Activated CD4-positive, alpha-beta T cell treated with anti-CD3 and anti-CD28 coated beads for 36 hours (primary cell): ENCODE measurements at regions of chr22 and their contacts with region 1.

Region 1: DNA sequence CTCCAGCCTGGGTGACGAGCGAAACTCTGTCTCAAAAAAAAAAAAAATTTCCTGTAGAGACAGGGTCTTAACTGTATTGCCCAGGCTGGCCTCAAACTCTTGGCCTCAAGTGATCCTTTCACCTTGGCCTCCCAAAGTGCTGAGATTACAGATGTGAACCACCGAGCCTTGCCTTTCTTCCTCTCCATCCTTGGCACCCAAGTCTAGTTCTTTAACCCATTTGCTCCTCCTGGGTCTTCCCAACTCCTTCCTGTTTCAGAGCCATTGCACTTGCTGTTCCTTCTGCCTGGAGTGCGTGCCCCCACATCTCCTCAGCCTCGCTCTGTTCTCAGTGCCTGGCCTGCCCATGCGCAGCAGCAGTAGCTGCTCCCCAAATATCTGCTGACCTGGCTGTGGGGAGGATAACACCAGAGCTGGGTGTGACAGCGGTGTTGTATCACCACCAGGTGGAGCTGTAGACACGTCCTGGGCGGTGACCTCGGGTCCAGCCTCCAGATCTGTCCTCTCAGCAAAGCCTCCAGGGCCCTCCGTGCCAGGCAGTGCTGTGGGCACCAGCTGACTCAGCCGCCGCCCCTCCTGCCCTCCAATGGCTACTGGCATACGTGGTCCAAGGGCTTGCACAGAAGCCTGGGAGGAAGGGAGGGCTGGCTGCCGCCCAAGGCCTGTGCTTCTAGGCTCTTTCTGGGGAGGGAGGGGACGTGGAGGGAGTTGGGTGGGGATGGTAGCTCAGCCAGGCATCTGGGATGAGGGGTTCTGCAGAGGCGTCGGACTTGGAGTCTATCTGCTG is 22.0 kb downstream of the TEF start:
- DNase-seq: peak; percentile 93
- ATAC-seq: peak; percentile 99
- H3K4me3 Mint-ChIP-seq: no peak overlapping the region
- H3K27ac Mint-ChIP-seq: no peak overlapping the region
- H3K4me1 Mint-ChIP-seq: peaks cover 17% of the 10 kb centered on the region
- H3K27me3 Mint-ChIP-seq: no peaks in the 10 kb centered on the region

Region 2: GRCh38 chr22:40982482-40983385 is 421.0 kb before region 1 on chr22:
- CTCF ChIA-PET with region 1: no interaction called
- POLR2A ChIA-PET with region 1: no interaction called
- intact Hi-C with region 1: no loop called
- DNase-seq: no peak
- ATAC-seq: no peak
- H3K4me3 Mint-ChIP-seq: no peak overlapping the region
- H3K27ac Mint-ChIP-seq: no peak overlapping the region
- H3K4me1 Mint-ChIP-seq: no peaks in the 10 kb centered on the region
- H3K27me3 Mint-ChIP-seq: no peaks in the 10 kb centered on the region

Region 3: DNA sequence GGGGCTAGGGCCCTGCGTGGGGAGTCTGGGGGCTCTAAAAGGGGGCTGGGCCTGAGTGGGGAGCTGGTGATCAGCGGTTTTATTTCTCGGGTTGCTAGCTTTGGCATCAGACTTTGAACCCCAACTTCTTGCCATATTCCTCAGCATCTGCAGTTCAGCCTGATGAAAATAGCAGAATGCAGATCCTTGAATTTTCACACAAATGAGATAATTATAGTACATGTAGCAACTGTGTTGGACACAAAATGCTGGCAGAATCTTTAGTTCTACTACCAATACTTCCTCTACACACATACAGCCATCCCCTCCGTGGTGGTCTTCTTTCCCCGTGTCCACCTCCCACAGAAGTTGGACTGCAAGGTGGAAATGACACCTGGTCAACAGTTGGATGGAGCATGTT is 100.9 kb before region 1 on chr22:
- CTCF ChIA-PET with region 1: no interaction called
- POLR2A ChIA-PET with region 1: no interaction called
- intact Hi-C with region 1: no loop called
- DNase-seq: no peak
- ATAC-seq: no peak
- H3K4me3 Mint-ChIP-seq: peak overlapping the region; percentile 74
- H3K27ac Mint-ChIP-seq: peak overlapping the region; percentile 55
- H3K4me1 Mint-ChIP-seq: peaks cover 31% of the 10 kb centered on the region
- H3K27me3 Mint-ChIP-seq: no peaks in the 10 kb centered on the region

Region 4: DNA sequence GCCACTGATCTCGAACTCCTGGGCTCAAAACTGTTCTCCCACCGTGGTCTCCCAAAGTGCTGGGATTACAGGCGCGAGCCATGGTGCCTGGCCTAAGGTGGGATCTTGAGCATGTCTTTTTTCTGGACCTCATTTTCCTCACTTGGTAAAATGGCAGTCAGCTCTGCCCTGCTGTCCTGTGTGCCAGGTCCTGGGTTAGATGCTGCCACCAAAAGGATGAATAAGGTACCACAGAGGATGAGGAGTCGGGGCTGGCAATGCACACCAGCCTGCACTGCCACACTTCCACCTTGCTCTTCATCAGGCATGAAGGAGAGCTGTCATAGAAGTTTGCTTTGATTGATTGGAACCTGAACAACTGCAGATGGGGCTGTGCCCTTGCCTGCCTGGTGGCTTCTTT is 97.5 kb after region 1 on chr22:
- CTCF ChIA-PET with region 1: interaction called, 32 read pairs
- POLR2A ChIA-PET with region 1: no interaction called
- intact Hi-C with region 1: loop called in 1 of 2 experiments (anchors 1 kb)
- DNase-seq: peak; percentile 45
- ATAC-seq: peak; percentile 84
- H3K4me3 Mint-ChIP-seq: no peak overlapping the region
- H3K27ac Mint-ChIP-seq: no peak overlapping the region
- H3K4me1 Mint-ChIP-seq: no peaks in the 10 kb centered on the region
- H3K27me3 Mint-ChIP-seq: no peaks in the 10 kb centered on the region

Region 5: GRCh38 chr22:41517172-41518047 is 113.7 kb after region 1 on chr22:
- CTCF ChIA-PET with region 1: interaction called, 53 read pairs
- POLR2A ChIA-PET with region 1: interaction called, 3 read pairs
- intact Hi-C with region 1: loop called (anchors 1 to 2 kb)
- DNase-seq: peak; percentile 76
- ATAC-seq: peak; percentile 92
- H3K4me3 Mint-ChIP-seq: no peak overlapping the region
- H3K27ac Mint-ChIP-seq: peak overlapping the region; percentile 31
- H3K4me1 Mint-ChIP-seq: peaks cover 6% of the 10 kb centered on the region
- H3K27me3 Mint-ChIP-seq: no peaks in the 10 kb centered on the region

Region 6: GRCh38 chr22:41526837-41527799 is 123.4 kb after region 1 on chr22:
- CTCF ChIA-PET with region 1: interaction called, 57 read pairs
- POLR2A ChIA-PET with region 1: interaction called, 3 read pairs
- intact Hi-C with region 1: loop called (anchors 1 to 2 kb)
- DNase-seq: peak; percentile 77
- ATAC-seq: peak; percentile 64
- H3K4me3 Mint-ChIP-seq: no peak overlapping the region
- H3K27ac Mint-ChIP-seq: peak overlapping the region; percentile 19
- H3K4me1 Mint-ChIP-seq: peaks cover 15% of the 10 kb centered on the region
- H3K27me3 Mint-ChIP-seq: no peaks in the 10 kb centered on the region

Region 7: GRCh38 chr22:41532908-41533825 is 129.4 kb after region 1 on chr22:
- CTCF ChIA-PET with region 1: interaction called, 57 read pairs
- POLR2A ChIA-PET with region 1: interaction called, 3 read pairs
- intact Hi-C with region 1: loop called in 1 of 2 experiments (anchors 1 kb)
- DNase-seq: peak; percentile 88
- ATAC-seq: peak; percentile 92
- H3K4me3 Mint-ChIP-seq: no peak overlapping the region
- H3K27ac Mint-ChIP-seq: peak overlapping the region; percentile 19
- H3K4me1 Mint-ChIP-seq: no peaks in the 10 kb centered on the region
- H3K27me3 Mint-ChIP-seq: no peaks in the 10 kb centered on the region

Region 8: GRCh38 chr22:41596776-41597634 is 193.3 kb after region 1 on chr22:
- CTCF ChIA-PET with region 1: interaction called, 4 read pairs
- POLR2A ChIA-PET with region 1: no interaction called
- intact Hi-C with region 1: loop called in 1 of 2 experiments (anchors 5 kb)
- DNase-seq: peak; percentile 68
- ATAC-seq: peak; percentile 90
- H3K4me3 Mint-ChIP-seq: no peak overlapping the region
- H3K27ac Mint-ChIP-seq: no peak overlapping the region
- H3K4me1 Mint-ChIP-seq: no peaks in the 10 kb centered on the region
- H3K27me3 Mint-ChIP-seq: no peaks in the 10 kb centered on the region